Naive thymus-derived CD4-positive, alpha-beta T cell (primary cell): ENCODE measurements at regions of chr1 and their contacts with region 1.

Region 1: DNA sequence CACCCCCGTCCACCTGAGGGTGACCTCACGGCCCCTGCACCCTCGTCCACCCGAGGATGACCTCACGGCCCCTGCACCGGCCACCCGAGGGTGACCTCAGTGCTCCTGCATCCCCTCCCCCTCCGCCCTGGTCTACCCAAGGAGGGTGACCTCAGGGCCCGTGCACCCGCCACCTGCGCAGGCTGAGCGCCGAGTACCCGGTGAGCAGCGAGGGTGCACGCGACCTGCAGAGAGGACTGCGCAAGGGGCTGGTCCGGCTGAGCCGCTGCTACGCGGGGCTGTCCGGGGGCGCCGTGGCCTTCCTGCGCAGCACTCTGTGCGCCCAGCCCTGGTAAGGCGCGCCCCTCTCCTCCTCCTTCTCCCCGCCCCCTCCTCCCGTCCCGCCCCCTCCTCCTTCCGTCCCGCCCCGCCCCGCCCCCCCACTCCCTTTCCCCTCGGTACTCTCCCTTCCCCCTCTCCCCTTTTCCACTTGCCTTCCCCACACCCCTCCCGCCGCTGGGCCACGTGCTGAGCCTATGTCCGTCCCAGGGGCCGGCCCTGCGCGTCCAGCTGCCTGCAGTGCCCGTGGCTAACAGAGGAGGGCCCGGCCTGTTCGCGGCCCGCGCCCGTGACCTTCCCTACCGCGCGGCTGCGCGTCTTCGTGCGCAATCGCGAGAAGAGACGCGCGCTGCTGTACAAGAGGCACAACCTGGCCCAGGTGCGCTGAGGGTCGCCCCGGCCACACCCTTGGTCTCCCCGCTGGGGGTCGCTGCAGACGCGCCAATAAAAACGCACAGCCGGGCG is 28.4 kb downstream of the TRIM11 start:
- DNase-seq: peak; percentile 37 to 75 (median 61)
- ATAC-seq: peak; percentile 58
- H3K4me3 ChIP-seq: peak overlapping the region; percentile 37
- H3K4me3 Mint-ChIP-seq: peak overlapping the region; percentile 80 to 90 (median 84)
- H3K27ac ChIP-seq: no peak overlapping the region
- H3K27ac Mint-ChIP-seq: peak overlapping the region in 4 of 9 donors; percentile 28 to 72 (median 51)
- H3K4me1 ChIP-seq: no peaks in the 10 kb centered on the region
- H3K4me1 Mint-ChIP-seq: peaks cover 6 to 18% (median 8%) of the 10 kb centered on the region in 7 donors
- H3K27me3 ChIP-seq: peaks cover 0 to 4% of the 10 kb centered on the region in 2 donors
- H3K27me3 Mint-ChIP-seq: peaks cover 0 to 42% (median 9%) of the 10 kb centered on the region in 5 donors

Region 2: GRCh38 chr1:228416217-228416933 is 38.1 kb after region 1 on chr1 and contains the start of gene TRIM17:
- CTCF ChIA-PET with region 1: no interaction called
- POLR2A ChIA-PET with region 1: no interaction called
- intact Hi-C with region 1: loop called in 1 of 2 experiments (anchors 1 kb)
- DNase-seq: peak in 8 of 9 donors; percentile 15 to 47 (median 31)
- ATAC-seq: peak; percentile 69
- H3K4me3 ChIP-seq: peak within 1 kb of the TSS; percentile 48
- H3K4me3 Mint-ChIP-seq: peak within 1 kb of the TSS; percentile 73 to 91 (median 86)
- H3K27ac ChIP-seq: peak within 1 kb of the TSS; percentile 11
- H3K27ac Mint-ChIP-seq: peak within 1 kb of the TSS in 8 of 9 donors; percentile 24 to 76 (median 38)
- H3K4me1 ChIP-seq: peaks cover 5 to 15% of the 10 kb centered on the region in 2 donors
- H3K4me1 Mint-ChIP-seq: peaks cover 8 to 30% (median 27%) of the 10 kb centered on the region in 7 donors
- H3K27me3 ChIP-seq: no peaks in the 10 kb centered on the region
- H3K27me3 Mint-ChIP-seq: peaks cover 0 to 45% (median 10%) of the 10 kb centered on the region in 5 donors
- total RNA-seq, gene TRIM17: 0.92 to 2.5 (median 1.8) TPM

Region 3: GRCh38 chr1:228500901-228501871 is 122.9 kb after region 1 on chr1:
- CTCF ChIA-PET with region 1: no interaction called
- POLR2A ChIA-PET with region 1: no interaction called
- intact Hi-C with region 1: loop called in 1 of 2 experiments (anchors 5 kb)
- DNase-seq: peak; percentile 72 to 89 (median 85)
- ATAC-seq: peak; percentile 99
- H3K4me3 ChIP-seq: peak overlapping the region; percentile 44
- H3K4me3 Mint-ChIP-seq: peak overlapping the region; percentile 71 to 86 (median 80)
- H3K27ac ChIP-seq: no peak overlapping the region
- H3K27ac Mint-ChIP-seq: peak overlapping the region in 5 of 9 donors; percentile 19 to 72 (median 66)
- H3K4me1 ChIP-seq: peaks cover 9 to 14% of the 10 kb centered on the region in 2 donors
- H3K4me1 Mint-ChIP-seq: peaks cover 9 to 31% (median 18%) of the 10 kb centered on the region in 7 donors
- H3K27me3 ChIP-seq: no peaks in the 10 kb centered on the region
- H3K27me3 Mint-ChIP-seq: peaks cover 0 to 8% (median 0%) of the 10 kb centered on the region in 5 donors